ENCODE measurements at regions of chr16 and their contacts with region 1.

Region 1: DNA sequence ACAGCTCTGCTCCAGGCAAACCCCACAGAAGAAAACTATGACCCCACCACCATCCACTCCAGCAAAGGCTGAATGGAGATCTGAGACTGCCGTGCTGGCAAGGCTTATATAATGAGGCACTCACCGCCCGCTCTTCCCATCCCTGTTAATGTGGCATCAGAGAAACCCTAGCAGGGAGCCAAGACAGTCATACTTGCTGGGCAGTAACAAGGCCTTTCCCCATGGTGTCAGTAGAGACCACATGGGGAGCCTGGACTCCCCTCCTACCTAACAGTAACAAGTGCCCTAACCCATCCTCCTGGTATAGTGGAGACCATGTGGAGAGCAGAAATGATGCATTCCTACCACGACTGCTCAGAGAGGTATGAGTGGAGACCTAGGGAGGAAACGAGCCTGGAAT is 235.2 kb downstream of the C16orf78 start:
- DNase-seq: no peak
- ATAC-seq: peak; percentile 84

Region 2: DNA sequence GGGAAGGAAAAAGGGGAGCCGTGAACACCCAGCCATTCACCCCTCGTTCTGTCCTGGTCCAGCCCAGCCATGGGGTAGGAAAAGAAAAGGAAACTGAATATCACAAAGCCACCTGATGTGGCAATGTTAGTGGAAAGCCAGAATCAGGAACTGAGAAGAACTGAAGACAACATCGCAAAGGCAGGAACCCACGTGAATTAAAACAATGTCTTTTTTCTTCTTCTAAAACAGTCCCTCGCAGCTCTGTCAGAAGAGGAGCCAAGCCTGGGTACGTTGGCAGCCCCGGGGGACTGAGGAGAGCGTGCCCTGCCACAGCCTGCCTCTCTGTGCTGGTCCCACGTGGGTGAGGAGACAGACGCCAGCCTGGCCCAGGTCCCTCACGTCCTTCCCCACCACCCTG is 192.1 kb after region 1 on chr16:
- intact Hi-C with region 1: no loop called
- DNase-seq: no peak
- ATAC-seq: no peak

Region 3: GRCh38 chr16:49876716-49877129 is 267.9 kb after region 1 on chr16:
- intact Hi-C with region 1: no loop called
- DNase-seq: peak; percentile 85
- ATAC-seq: peak; percentile 96

Region 4: DNA sequence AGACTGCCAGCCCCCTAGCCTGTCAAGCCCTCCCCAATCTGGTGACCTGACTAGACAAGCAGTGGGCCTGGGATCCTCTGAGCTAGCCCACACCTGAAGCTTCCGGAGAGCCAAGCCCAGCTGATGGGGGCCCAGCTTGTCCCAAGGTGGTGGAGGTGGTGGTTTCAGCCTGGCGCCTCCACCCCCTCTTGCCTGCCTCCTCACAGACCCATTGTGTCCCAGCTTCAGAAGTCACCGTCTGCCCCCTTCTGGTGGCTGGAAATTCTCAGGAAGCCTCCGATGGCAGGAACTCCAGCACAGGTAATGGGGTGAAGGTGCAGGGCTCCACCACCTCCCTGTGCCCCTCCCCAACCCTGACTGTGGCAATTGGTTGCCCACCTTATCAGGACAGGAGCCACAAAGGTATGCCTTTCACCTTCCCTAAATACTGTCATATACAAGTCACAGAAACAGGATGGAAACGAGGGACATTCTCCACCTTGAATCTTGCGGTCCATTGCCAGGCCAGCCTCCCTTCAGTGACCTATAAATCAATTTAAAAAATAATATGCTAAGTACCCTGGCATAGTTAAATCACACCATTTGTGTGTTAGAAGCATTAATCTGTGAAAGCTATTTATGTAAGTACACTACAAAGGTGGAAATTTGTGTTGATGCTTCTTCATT is 313.1 kb after region 1 on chr16:
- intact Hi-C with region 1: loop called (anchors 10 kb)
- DNase-seq: peak; percentile 65
- ATAC-seq: peak; percentile 81

Measured in left ventricle myocardium superior (tissue), 1 donor.